Activated CD8-positive, alpha-beta T cell treated with anti-CD3 and anti-CD28 coated beads, Interleukin-2, amount 10 ng/mL, durations not matched to agents 7 days and 5 days (primary cell): ENCODE measurements at regions of chr9 and their contacts with region 1.

Region 1: DNA sequence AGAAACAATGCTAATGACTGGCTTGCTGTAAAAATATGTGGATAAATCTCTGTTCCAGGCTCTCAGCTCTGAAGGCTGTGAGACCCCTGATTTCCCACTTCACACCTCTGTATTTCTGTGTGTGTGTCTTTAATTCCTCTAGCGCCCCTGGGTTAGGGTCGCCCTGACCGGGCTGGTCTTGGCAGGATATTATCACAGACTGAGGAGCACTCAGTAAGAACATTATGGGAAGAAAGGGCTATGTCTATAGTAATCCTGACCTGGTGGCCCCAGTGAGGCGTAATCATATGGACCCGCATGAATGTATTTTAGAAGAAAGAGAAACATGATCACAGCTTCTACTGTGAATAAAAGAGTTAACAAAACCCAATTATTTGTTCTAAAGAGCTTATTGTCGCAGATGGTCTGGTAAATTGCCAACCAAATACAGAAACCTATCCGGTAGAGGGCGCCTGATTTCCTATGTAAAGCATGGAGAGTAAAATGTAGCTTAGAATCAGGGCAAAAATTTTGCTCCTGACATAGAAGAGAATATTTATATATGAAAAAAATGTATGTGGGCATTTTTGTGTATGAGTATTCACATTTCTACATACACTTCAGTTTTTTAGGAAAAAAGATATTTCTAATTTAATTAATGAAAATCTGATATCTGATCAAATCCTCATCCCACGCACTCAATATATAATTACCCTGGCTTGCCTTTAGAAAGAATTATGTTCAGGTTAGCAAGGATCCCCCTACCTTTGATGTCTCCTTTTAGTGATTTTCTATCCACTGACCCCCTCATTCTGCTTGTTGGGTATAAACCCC is 5.8 kb upstream of the IFNA1 start:
- DNase-seq: peak; percentile 73
- ATAC-seq: peak; percentile 51
- H3K4me3 Mint-ChIP-seq: no peak overlapping the region
- H3K27ac Mint-ChIP-seq: no peak overlapping the region
- H3K4me1 Mint-ChIP-seq: no peaks in the 10 kb centered on the region
- H3K27me3 Mint-ChIP-seq: peaks cover 37% of the 10 kb centered on the region

Region 2: DNA sequence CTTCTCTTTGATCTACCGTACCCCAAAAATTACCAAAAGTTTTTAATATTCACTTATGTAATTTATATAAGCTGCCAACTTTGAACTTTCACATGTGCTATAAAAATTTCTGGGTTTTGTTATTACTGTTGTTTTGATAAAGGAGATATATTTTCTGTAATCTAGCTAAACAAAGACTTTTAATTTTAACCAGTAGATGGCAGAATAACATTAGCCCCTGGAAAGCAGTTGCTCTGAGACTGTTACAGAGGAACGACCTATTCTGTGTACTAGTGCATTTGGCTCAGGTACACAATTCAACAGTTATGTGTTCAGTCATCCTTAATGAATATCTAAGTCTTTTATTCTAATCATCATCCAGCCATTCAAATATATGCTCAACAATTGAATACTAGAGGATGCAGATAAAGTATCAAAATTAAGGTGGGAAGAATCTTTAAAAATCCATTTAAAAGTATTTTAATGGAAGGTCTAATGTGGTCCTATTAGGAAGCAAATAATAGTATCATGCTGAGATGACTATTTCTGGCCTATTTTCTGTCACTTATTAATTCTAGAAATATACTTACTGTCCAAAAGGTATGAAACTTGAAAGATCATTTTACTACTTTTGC is 107.8 kb before region 1 on chr9:
- CTCF ChIA-PET with region 1: interaction called, 16 read pairs
- POLR2A ChIA-PET with region 1: no interaction called
- DNase-seq: no peak
- ATAC-seq: peak; percentile 80
- H3K4me3 Mint-ChIP-seq: no peak overlapping the region
- H3K27ac Mint-ChIP-seq: no peak overlapping the region
- H3K4me1 Mint-ChIP-seq: peaks cover 37% of the 10 kb centered on the region
- H3K27me3 Mint-ChIP-seq: no peaks in the 10 kb centered on the region

Region 3: DNA sequence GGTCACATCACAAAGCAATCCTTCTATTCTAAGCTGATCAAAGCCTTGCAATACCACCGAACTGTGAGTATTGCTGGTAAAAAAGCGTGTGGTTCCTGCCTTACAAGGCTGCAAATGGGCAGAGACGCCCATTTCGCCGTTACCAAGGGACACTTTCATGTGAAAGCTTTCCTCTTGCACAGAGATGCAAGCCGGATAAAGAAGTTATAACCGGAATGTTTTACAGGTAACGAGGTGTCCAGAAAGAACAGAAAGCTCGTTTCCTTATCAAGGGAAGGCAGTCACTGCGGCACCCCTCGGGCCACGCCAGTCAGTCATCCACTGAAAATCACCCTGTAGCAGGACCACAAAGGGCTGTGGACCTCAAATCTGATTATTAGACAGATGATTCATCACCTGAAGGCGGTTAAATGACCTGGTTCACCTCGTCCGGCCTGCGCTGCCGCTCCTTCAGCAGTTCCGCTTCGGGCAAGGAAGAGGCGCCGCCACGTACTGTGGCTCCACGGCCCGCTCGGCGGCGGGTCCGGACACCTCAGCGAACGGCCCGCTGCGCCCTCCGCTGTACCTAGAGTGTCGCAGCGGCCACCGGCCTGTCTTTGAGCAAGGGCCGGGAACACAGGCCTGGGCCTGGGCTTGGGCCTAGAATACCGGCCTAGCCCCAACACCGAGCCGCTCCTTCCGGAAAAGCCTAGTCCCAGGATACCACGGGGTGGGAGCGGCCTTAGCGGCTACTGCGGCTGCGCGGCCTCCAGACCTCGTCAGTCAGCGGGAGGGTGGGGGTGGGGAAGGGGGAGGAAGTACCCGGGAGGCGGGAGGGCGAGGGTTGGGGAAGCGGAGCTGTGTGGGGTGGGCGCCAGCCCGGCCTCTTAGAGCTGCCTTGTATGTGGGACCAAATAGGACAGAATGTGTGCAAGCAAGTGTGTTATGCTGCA is 99.4 kb before region 1 on chr9 and contains the start of gene KLHL9:
- CTCF ChIA-PET with region 1: interaction called, 16 read pairs
- POLR2A ChIA-PET with region 1: no interaction called
- DNase-seq: peak; percentile 90
- ATAC-seq: peak; percentile 90
- H3K4me3 Mint-ChIP-seq: peak within 1 kb of the TSS; percentile 89
- H3K27ac Mint-ChIP-seq: peak within 1 kb of the TSS; percentile 91
- H3K4me1 Mint-ChIP-seq: peaks cover 45% of the 10 kb centered on the region
- H3K27me3 Mint-ChIP-seq: peaks cover 11% of the 10 kb centered on the region
- total RNA-seq, gene KLHL9: 17.9 to 18.8 TPM

Region 4: DNA sequence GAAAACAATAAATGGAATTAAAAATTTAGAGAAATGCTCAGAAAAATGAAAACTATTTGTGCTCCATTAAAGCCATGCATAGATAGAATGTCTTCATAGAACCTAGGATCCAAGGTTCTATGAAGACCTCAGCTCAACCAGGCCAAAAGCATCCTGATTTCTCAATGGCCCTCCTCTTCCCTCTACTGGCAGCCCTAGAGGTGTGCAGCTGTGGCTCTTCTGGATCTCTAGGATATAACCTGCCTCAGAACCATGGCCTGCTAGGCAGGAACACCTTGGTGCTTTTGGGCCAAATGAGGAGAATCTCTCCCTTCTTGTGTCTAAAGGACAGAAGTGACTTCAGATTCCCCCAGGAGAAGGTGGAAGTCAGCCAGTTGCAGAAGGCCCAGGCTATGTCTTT is 20.9 kb after region 1 on chr9:
- CTCF ChIA-PET with region 1: interaction called, 13 read pairs
- POLR2A ChIA-PET with region 1: no interaction called
- DNase-seq: peak; percentile 32
- ATAC-seq: peak; percentile 83
- H3K4me3 Mint-ChIP-seq: no peak overlapping the region
- H3K27ac Mint-ChIP-seq: no peak overlapping the region
- H3K4me1 Mint-ChIP-seq: no peaks in the 10 kb centered on the region
- H3K27me3 Mint-ChIP-seq: peaks cover 23% of the 10 kb centered on the region

Region 5: DNA sequence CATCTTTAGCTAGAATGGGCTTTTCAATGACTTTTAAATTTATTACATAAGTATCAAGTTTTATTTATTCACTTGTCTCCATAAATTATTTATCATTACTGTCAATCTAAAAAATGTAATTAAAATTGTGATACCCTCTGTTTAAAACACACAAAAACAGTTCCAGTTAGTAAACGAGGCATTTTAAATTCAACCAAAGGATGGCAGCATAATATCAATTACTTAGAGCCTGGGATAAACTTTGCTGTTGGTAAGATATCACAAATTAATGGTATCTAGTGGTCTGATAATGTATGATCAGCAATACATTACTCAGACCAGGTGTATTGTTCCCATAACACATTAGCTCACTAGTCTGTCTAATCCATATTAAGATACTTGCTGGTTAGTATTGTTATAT is 57.3 kb after region 1 on chr9:
- CTCF ChIA-PET with region 1: no interaction called
- POLR2A ChIA-PET with region 1: no interaction called
- DNase-seq: no peak
- ATAC-seq: no peak
- H3K4me3 Mint-ChIP-seq: no peak overlapping the region
- H3K27ac Mint-ChIP-seq: no peak overlapping the region
- H3K4me1 Mint-ChIP-seq: no peaks in the 10 kb centered on the region
- H3K27me3 Mint-ChIP-seq: no peaks in the 10 kb centered on the region

Region 6: GRCh38 chr9:21504113-21504512 is 69.7 kb after region 1 on chr9:
- CTCF ChIA-PET with region 1: no interaction called
- POLR2A ChIA-PET with region 1: no interaction called
- DNase-seq: no peak
- ATAC-seq: no peak
- H3K4me3 Mint-ChIP-seq: no peak overlapping the region
- H3K27ac Mint-ChIP-seq: no peak overlapping the region
- H3K4me1 Mint-ChIP-seq: peaks cover 9% of the 10 kb centered on the region
- H3K27me3 Mint-ChIP-seq: no peaks in the 10 kb centered on the region

Region 7: DNA sequence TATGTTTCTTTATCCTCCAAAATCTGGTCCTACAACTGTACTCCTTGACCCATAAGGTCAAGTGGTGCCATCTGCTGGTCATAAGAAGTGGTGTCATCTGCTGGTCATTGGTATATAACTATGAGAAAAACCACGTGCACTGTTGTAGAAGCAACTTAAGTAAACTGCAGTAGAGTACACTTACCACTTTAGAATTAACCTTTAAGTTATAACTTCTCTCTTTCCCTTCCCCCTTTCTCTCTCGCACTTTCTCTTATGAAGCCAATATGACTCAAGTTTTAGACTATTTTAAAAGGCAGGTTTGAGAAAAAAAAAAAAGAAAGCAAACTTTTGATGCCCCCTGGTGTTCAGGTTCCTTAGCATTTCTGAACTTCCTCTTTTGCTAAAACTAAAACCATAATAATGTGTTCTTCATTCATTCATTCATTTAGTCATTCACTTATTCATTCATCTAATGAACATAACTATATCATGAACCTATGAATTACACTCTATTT is 355.2 kb after region 1 on chr9:
- CTCF ChIA-PET with region 1: interaction called, 12 read pairs
- POLR2A ChIA-PET with region 1: no interaction called
- DNase-seq: peak; percentile 71
- ATAC-seq: peak; percentile 97
- H3K4me3 Mint-ChIP-seq: peak overlapping the region; percentile 69
- H3K27ac Mint-ChIP-seq: no peak overlapping the region
- H3K4me1 Mint-ChIP-seq: peaks cover 6% of the 10 kb centered on the region
- H3K27me3 Mint-ChIP-seq: peaks cover 25% of the 10 kb centered on the region